Activated CD8-positive, alpha-beta memory T cell treated with anti-CD3 and anti-CD28 coated beads, Interleukin-2, amount 10 ng/mL, durations not matched to agents 7 days and 5 days (primary cell): ENCODE measurements at regions of chr5 and their contacts with region 1.

Region 1: GRCh38 chr5:141960449-141961202 is 2.6 kb upstream of the PCDH12 start:
- DNase-seq: peak; percentile 94
- ATAC-seq: peak; percentile 96
- H3K4me3 Mint-ChIP-seq: peak overlapping the region; percentile 29
- H3K27ac Mint-ChIP-seq: peak overlapping the region; percentile 79
- H3K4me1 Mint-ChIP-seq: peaks cover 45% of the 10 kb centered on the region
- H3K27me3 Mint-ChIP-seq: no peaks in the 10 kb centered on the region

Region 2: DNA sequence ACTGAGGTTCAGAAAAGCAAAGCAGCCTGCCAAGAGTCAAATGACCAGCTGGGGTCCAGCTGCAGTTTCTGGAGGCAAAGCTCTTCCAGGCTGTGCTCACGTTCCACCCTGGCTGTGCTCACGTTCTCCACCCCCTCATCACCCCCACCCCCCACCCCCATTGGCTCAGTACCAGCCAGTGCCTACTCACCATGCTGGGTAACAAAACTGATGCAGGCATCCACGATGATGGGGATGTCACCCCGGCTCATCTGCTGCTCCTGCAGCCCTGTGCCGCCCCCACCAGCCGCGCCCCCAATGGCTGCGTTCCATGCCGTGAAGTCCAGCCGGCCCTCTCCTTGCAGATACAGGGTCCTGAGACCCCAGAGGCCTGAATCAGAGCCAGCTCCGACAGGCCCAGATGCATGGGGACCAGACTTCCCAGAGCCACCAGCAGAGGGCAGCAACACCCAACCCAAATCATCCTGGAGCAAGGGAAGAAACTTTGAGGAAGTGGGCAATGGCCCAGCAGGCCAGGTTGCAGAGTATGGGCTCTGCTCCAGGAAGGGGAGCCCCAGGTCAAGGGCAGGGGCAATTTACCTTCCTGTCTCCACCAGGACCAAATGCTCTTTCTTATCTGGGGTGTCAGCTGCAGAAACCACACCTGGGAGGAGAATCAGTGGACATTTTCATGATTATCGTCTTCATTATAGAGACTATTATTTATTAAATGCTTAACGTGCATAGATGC is 295.7 kb before region 1 on chr5:
- CTCF ChIA-PET with region 1: interaction called, 11 read pairs
- DNase-seq: peak; percentile 81
- ATAC-seq: peak; percentile 93
- H3K4me3 Mint-ChIP-seq: no peak overlapping the region
- H3K27ac Mint-ChIP-seq: no peak overlapping the region
- H3K4me1 Mint-ChIP-seq: peaks cover 2% of the 10 kb centered on the region
- H3K27me3 Mint-ChIP-seq: no peaks in the 10 kb centered on the region

Region 3: GRCh38 chr5:141701360-141702119 is 259.1 kb before region 1 on chr5:
- CTCF ChIA-PET with region 1: interaction called, 195 read pairs
- DNase-seq: no peak
- ATAC-seq: peak; percentile 28
- H3K4me3 Mint-ChIP-seq: peak overlapping the region; percentile 62
- H3K27ac Mint-ChIP-seq: no peak overlapping the region
- H3K4me1 Mint-ChIP-seq: peaks cover 22% of the 10 kb centered on the region
- H3K27me3 Mint-ChIP-seq: peaks cover 42% of the 10 kb centered on the region

Region 4: GRCh38 chr5:141878711-141879425 is 81.8 kb before region 1 on chr5:
- CTCF ChIA-PET with region 1: interaction called, 92 read pairs
- DNase-seq: peak; percentile 91
- ATAC-seq: peak; percentile 88
- H3K4me3 Mint-ChIP-seq: peak overlapping the region; percentile 38
- H3K27ac Mint-ChIP-seq: peak overlapping the region; percentile 8
- H3K4me1 Mint-ChIP-seq: peaks cover 22% of the 10 kb centered on the region
- H3K27me3 Mint-ChIP-seq: peaks cover 88% of the 10 kb centered on the region

Region 5: GRCh38 chr5:141914199-141914743 is 46.4 kb before region 1 on chr5:
- CTCF ChIA-PET with region 1: interaction called, 45 read pairs
- DNase-seq: no peak
- ATAC-seq: peak; percentile 74
- H3K4me3 Mint-ChIP-seq: no peak overlapping the region
- H3K27ac Mint-ChIP-seq: no peak overlapping the region
- H3K4me1 Mint-ChIP-seq: peaks cover 6% of the 10 kb centered on the region
- H3K27me3 Mint-ChIP-seq: peaks cover 49% of the 10 kb centered on the region

Region 6: DNA sequence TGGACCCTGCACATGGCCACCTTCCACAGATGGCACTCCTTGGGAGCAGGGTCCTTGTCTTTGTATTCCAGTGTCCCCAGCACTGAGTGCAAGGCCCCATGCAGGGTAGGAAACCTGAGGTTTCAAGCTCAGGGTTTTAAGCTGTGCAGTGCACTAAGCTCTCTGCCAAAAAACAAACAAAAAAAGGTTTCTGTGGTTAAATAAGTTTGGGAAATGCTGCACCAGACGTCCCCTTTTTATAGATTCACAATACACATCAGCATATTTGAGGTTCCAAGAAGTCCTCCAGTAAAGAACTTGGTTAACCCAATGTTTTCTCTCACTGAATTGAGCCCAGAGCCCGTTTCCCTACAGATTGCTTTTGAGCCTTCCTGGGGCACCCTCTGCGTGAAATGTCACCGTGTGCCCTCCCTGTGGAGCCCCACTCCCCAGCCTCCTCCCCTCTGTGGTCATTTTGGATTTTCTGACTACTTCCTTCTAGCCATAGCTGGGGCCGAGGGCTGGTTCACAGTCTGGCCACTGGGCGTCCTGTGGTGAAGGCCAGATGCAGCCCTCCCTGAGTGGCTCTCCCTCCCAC is 19.8 kb before region 1 on chr5:
- CTCF ChIA-PET with region 1: interaction called, 103 read pairs
- DNase-seq: no peak
- ATAC-seq: no peak
- H3K4me3 Mint-ChIP-seq: no peak overlapping the region
- H3K27ac Mint-ChIP-seq: peak overlapping the region; percentile 34
- H3K4me1 Mint-ChIP-seq: peaks cover 13% of the 10 kb centered on the region
- H3K27me3 Mint-ChIP-seq: no peaks in the 10 kb centered on the region

Region 7: DNA sequence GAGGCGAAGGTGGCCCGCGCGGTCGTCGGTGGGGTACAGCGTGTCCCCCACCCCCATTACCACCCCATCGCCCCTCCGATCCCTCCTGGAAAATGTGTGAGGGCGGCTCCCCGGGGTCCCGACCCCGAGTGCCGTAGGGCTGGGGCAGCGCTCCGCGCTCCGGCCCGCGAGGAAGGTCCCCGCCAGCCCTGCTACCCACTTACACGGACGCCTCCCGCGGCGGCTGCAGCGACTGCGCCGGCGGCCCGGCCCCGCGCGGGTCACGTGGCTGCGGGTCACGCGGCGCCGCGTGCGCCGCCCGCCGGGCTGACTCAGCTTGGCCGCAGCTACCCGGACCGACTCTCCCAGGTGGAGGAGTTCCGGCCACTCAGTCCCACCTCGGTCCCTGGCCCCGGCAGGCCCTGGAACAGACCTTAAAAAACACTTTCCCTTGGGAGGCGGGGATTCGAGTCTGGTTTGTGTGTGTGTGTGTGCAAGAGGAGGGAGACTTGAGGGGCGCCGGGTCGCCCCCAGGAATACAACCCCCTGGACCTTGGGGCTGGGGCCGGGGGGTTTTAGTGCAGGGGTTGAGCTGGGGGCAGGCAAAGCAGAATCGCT is 52.3 kb after region 1 on chr5 and contains the start of gene GNPDA1:
- CTCF ChIA-PET with region 1: interaction called, 13 read pairs
- DNase-seq: peak; percentile 74
- ATAC-seq: peak; percentile 59
- H3K4me3 Mint-ChIP-seq: peak within 1 kb of the TSS; percentile 74
- H3K27ac Mint-ChIP-seq: peak within 1 kb of the TSS; percentile 81
- H3K4me1 Mint-ChIP-seq: peaks cover 57% of the 10 kb centered on the region
- H3K27me3 Mint-ChIP-seq: peaks cover 14% of the 10 kb centered on the region
- total RNA-seq, gene GNPDA1: 7.7 to 10.0 TPM